Spleen (tissue), 13 donors: ENCODE measurements at regions of chr15 and their contacts with region 1.

Region 1: GRCh38 chr15:66851226-66852071 is 149.4 kb downstream of the SMAD6 start:
- DNase-seq: peak; percentile 95
- H3K4me3 ChIP-seq: peak overlapping the region in 1 of 8 donors; percentile 33
- H3K27ac ChIP-seq: no peak overlapping the region
- H3K4me1 ChIP-seq: peaks cover 7 to 25% (median 14%) of the 10 kb centered on the region in 6 donors
- H3K27me3 ChIP-seq: peaks cover 0 to 37% (median 0%) of the 10 kb centered on the region in 7 donors
- CTCF ChIP-seq: peak; percentile 83 to 99 (median 97)
- POLR2A ChIP-seq: no peak

Region 2: DNA sequence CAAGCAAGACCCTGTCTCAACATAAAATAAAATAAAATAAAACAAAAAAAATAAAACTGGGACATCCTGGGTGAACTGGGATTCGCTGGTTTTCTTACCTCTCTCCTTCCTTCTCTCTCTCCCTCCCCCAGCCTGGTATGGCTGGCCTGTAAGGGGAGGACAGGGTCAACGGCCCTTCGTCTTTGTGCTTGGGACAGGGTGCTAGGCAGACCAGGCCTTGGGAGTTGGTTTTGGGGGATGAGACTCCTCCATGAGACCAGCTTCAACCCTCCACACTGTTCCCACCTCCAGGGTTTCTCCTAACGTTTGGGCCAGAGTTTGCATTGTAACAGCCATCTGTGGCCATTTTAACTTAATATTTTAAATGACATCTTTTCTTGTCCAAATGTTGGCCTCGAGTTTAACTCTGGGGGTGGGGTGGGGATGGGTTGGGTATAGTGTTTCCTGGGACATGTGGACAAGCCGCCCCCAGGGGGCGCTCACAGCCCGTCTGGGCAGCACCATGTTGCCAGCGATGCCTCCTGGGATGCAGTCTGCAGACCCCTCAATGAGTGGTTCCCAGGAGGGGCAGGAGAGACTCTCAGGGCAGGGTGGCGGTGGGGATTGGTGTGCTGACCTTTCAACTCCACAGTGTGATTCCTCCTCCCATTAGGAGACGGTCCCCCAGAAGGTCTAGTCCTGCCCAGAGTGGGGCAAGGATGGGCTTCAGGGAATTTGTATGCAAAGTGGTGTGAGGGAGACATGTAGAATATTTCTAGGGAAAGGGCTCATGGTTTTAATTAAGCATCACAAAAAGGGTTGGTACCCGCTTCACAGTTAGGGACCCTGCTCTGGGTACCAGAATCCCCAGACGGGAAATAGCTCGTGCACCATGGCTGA is 247.9 kb before region 1 on chr15:
- intact Hi-C with region 1: loop called (anchors 5 kb)
- DNase-seq: peak; percentile 91
- H3K4me3 ChIP-seq: no peak overlapping the region
- H3K27ac ChIP-seq: no peak overlapping the region
- H3K4me1 ChIP-seq: peaks cover 0 to 6% (median 0%) of the 10 kb centered on the region in 6 donors
- H3K27me3 ChIP-seq: peaks cover 0 to 28% (median 0%) of the 10 kb centered on the region in 7 donors
- CTCF ChIP-seq: peak; percentile 43 to 86 (median 66)
- POLR2A ChIP-seq: no peak

Region 3: GRCh38 chr15:66619151-66619903 is 232.1 kb before region 1 on chr15:
- intact Hi-C with region 1: loop called (anchors 5 kb)
- DNase-seq: peak; percentile 88
- H3K4me3 ChIP-seq: no peak overlapping the region
- H3K27ac ChIP-seq: no peak overlapping the region
- H3K4me1 ChIP-seq: peaks cover 8 to 82% (median 48%) of the 10 kb centered on the region in 6 donors
- H3K27me3 ChIP-seq: peaks cover 0 to 41% (median 15%) of the 10 kb centered on the region in 7 donors
- CTCF ChIP-seq: peak; percentile 42 to 91 (median 86)
- POLR2A ChIP-seq: no peak

Region 4: DNA sequence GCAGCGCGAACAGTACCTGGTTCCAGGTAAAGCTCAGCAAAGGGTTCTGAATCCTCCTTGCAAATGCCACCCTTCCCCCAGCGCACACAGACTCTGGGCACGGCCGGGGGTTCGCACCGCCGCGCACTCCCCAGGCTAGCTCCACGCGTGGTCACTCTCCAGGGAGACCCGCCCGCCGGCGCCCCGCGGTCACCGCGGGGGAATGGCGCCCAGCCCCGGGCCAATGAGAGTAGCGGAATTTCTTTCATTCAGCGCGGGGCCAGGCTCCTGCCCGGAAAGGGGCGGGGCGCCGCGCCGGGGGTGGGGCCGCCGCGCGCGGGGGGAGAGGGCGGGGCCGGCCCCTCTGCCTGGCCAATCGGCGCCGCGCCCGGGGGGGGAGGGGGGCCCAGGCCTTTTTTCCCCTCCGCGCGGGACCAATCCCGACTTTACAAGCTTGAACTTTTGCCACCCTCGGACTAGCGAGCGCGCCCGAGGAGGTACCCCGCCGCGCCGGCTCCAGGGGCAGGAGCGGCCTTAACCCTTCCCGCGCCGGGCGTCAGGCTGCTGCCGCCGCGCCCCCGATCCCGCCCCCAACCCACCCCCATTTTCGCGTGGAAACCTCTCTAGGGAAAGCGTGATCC is 150.5 kb before region 1 on chr15:
- intact Hi-C with region 1: no loop called
- DNase-seq: peak; percentile 94
- H3K4me3 ChIP-seq: peak overlapping the region; percentile 72 to 94 (median 84)
- H3K27ac ChIP-seq: peak overlapping the region in 7 of 8 donors; percentile 61 to 86 (median 79)
- H3K4me1 ChIP-seq: peaks cover 10 to 67% (median 33%) of the 10 kb centered on the region in 6 donors
- H3K27me3 ChIP-seq: peaks cover 0 to 46% (median 33%) of the 10 kb centered on the region in 7 donors
- CTCF ChIP-seq: no peak
- POLR2A ChIP-seq: no peak